ENCODE measurements at regions of chr1 and their contacts with region 1.

Region 1: GRCh38 chr1:78607334-78607927 is 12.8 kb upstream of the IFI44L start:
- DNase-seq: no peak
- H3K4me3 ChIP-seq: no peak overlapping the region
- H3K27ac ChIP-seq: no peak overlapping the region
- H3K4me1 ChIP-seq: no peaks in the 10 kb centered on the region
- H3K27me3 ChIP-seq: peaks cover 0 to 13% (median 0%) of the 10 kb centered on the region in 4 donors
- CTCF ChIP-seq: peak; percentile 11 to 73 (median 50)
- POLR2A ChIP-seq: no peak

Region 2: GRCh38 chr1:78132174-78132947 is 475.1 kb before region 1 on chr1:
- intact Hi-C with region 1: loop called (anchors 10 kb)
- DNase-seq: no peak
- H3K4me3 ChIP-seq: no peak overlapping the region
- H3K27ac ChIP-seq: no peak overlapping the region
- H3K4me1 ChIP-seq: no peaks in the 10 kb centered on the region
- H3K27me3 ChIP-seq: no peaks in the 10 kb centered on the region
- CTCF ChIP-seq: no peak
- POLR2A ChIP-seq: no peak

Region 3: GRCh38 chr1:78688701-78689100 is 81.3 kb after region 1 on chr1:
- intact Hi-C with region 1: no loop called
- DNase-seq: no peak
- H3K4me3 ChIP-seq: no peak overlapping the region
- H3K27ac ChIP-seq: no peak overlapping the region
- H3K4me1 ChIP-seq: no peaks in the 10 kb centered on the region
- H3K27me3 ChIP-seq: no peaks in the 10 kb centered on the region
- CTCF ChIP-seq: no peak
- POLR2A ChIP-seq: no peak